Activated T-helper 1 cell treated with anti-CD3 and anti-CD28 coated beads, Interleukin-12 subunit alpha, Interleukin-12 subunit beta, Interleukin-2, Interleukin-4 antibody, amounts not matched to agents 30 ng/mL and 10 ng/mL and 1 ng/mL, durations not matched to agents 14 hours and 24 hours and 36 hours (primary cell): ENCODE measurements at regions of chr11 and their contacts with region 1.

Region 1: DNA sequence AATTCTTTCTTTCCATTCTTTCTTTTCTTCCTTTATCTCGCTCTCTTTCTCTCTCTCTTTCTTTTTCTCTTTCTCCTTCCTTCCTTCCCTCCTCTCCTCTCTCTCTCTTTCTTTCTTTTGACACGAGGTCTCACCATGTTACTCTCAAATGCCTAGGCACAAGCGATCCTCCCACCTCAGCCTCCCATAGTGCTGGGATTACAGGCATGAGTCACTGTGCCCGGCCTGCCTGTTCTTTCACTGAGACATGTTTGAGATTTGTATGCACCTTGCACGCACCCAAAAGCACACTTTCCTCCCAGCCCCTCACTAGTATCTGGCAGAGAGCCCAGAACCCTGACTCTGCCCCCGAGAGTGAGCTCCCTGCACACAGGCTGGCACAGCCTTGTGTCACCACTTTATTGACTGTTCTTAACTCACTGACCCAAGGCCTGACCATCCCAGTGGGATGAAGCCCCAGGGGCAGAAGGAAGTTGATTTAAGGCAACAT is 56.8 kb downstream of the CD6 start:
- DNase-seq: no peak
- H3K4me3 Mint-ChIP-seq: peak overlapping the region; percentile 91
- H3K27ac Mint-ChIP-seq: peak overlapping the region; percentile 100
- H3K4me1 Mint-ChIP-seq: peaks cover 87% of the 10 kb centered on the region
- H3K27me3 Mint-ChIP-seq: no peaks in the 10 kb centered on the region

Region 2: GRCh38 chr11:61041755-61042518 is 13.6 kb after region 1 on chr11:
- intact Hi-C with region 1: loop called (anchors 1 kb)
- DNase-seq: peak; percentile 86
- H3K4me3 Mint-ChIP-seq: peak overlapping the region; percentile 72
- H3K27ac Mint-ChIP-seq: peak overlapping the region; percentile 91
- H3K4me1 Mint-ChIP-seq: peaks cover 55% of the 10 kb centered on the region
- H3K27me3 Mint-ChIP-seq: no peaks in the 10 kb centered on the region

Region 3: GRCh38 chr11:61054927-61055562 is 26.7 kb after region 1 on chr11:
- intact Hi-C with region 1: loop called (anchors 1 kb)
- DNase-seq: no peak
- H3K4me3 Mint-ChIP-seq: no peak overlapping the region
- H3K27ac Mint-ChIP-seq: peak overlapping the region; percentile 66
- H3K4me1 Mint-ChIP-seq: peaks cover 72% of the 10 kb centered on the region
- H3K27me3 Mint-ChIP-seq: no peaks in the 10 kb centered on the region

Region 4: GRCh38 chr11:61083601-61084147 is 55.4 kb after region 1 on chr11:
- intact Hi-C with region 1: loop called (anchors 2 kb)
- DNase-seq: peak; percentile 75
- H3K4me3 Mint-ChIP-seq: peak overlapping the region; percentile 88
- H3K27ac Mint-ChIP-seq: peak overlapping the region; percentile 99
- H3K4me1 Mint-ChIP-seq: peaks cover 67% of the 10 kb centered on the region
- H3K27me3 Mint-ChIP-seq: no peaks in the 10 kb centered on the region

Region 5: DNA sequence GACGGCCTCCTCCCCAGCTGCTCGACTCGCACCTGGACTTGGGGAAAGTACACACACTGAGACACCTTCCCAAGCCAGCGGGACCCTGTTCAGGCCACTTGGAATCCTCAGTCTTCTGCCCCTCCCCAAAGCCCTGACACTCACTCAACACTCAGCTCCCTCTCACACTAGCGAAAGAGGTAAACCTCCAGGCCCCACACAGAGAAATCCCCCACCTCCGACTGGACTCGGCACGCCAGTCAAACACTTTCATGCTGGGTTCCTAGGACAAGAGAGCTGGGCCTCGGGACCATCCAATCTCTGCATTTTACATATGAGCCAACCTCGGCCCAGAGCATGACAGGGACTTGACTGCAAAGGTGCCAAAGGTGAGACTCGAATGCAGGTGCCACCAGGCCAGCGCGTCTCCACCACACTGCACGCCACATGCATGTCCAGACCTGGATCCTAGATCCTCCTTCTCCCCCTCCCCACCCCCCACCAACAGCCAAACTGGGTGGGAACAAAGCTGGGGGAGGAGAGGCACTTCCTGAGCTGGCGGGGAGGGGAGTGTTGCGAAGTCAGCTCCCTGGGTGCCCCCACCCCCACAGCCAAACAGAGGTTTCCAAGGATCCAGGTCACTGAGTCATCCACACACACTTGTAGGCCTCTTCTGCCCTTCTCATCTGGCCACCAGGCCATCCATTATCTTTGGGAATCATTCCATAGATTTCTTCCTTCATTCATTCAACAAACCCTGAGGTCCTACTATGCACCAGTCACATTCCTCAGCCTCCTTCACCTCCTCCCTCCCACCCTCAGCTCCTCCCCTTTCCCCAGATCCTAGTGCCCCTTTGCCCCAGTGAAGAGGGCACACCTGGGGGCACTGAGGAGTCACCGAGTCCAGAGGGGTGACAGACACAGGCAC is 63.3 kb after region 1 on chr11:
- intact Hi-C with region 1: loop called (anchors 1 kb)
- DNase-seq: peak; percentile 41
- H3K4me3 Mint-ChIP-seq: peak overlapping the region; percentile 96
- H3K27ac Mint-ChIP-seq: peak overlapping the region; percentile 98
- H3K4me1 Mint-ChIP-seq: peaks cover 77% of the 10 kb centered on the region
- H3K27me3 Mint-ChIP-seq: no peaks in the 10 kb centered on the region

Region 6: GRCh38 chr11:61120706-61121191 is 92.4 kb after region 1 on chr11:
- intact Hi-C with region 1: loop called (anchors 1 kb)
- DNase-seq: no peak
- H3K4me3 Mint-ChIP-seq: peak overlapping the region; percentile 17
- H3K27ac Mint-ChIP-seq: peak overlapping the region; percentile 57
- H3K4me1 Mint-ChIP-seq: peaks cover 54% of the 10 kb centered on the region
- H3K27me3 Mint-ChIP-seq: no peaks in the 10 kb centered on the region

Region 7: GRCh38 chr11:61129639-61130523 is 101.6 kb after region 1 on chr11:
- intact Hi-C with region 1: loop called (anchors 1 kb)
- DNase-seq: peak; percentile 82
- H3K4me3 Mint-ChIP-seq: peak overlapping the region; percentile 63
- H3K27ac Mint-ChIP-seq: peak overlapping the region; percentile 65
- H3K4me1 Mint-ChIP-seq: peaks cover 16% of the 10 kb centered on the region
- H3K27me3 Mint-ChIP-seq: no peaks in the 10 kb centered on the region

Region 8: GRCh38 chr11:61392981-61393595 is 364.8 kb after region 1 on chr11:
- intact Hi-C with region 1: no loop called
- DNase-seq: no peak
- H3K4me3 Mint-ChIP-seq: peak overlapping the region; percentile 88
- H3K27ac Mint-ChIP-seq: peak overlapping the region; percentile 89
- H3K4me1 Mint-ChIP-seq: peaks cover 26% of the 10 kb centered on the region
- H3K27me3 Mint-ChIP-seq: no peaks in the 10 kb centered on the region